Gastrocnemius medialis (tissue), 4 donors: ENCODE measurements at regions of chr15 and their contacts with region 1.

Region 1: GRCh38 chr15:68672781-68673205 is 94.0 kb downstream of the CORO2B start:
- DNase-seq: no peak
- ATAC-seq: no peak
- H3K4me3 ChIP-seq: no peak overlapping the region
- H3K27ac ChIP-seq: no peak overlapping the region
- H3K4me1 ChIP-seq: peaks cover 0 to 4% of the 10 kb centered on the region in 2 donors
- H3K27me3 ChIP-seq: no peaks in the 10 kb centered on the region
- CTCF ChIP-seq: no peak
- POLR2A ChIP-seq: no peak

Region 2: GRCh38 chr15:68304589-68305337 is 368.0 kb before region 1 on chr15:
- in situ Hi-C with region 1: loop called in 1 of 4 experiments (anchors 25 kb)
- intact Hi-C with region 1: loop called (anchors 10 kb)
- DNase-seq: no peak
- ATAC-seq: no peak
- H3K4me3 ChIP-seq: no peak overlapping the region
- H3K27ac ChIP-seq: no peak overlapping the region
- H3K4me1 ChIP-seq: peaks cover 6 to 8% of the 10 kb centered on the region in 2 donors
- H3K27me3 ChIP-seq: no peaks in the 10 kb centered on the region
- CTCF ChIP-seq: no peak
- POLR2A ChIP-seq: no peak

Region 3: DNA sequence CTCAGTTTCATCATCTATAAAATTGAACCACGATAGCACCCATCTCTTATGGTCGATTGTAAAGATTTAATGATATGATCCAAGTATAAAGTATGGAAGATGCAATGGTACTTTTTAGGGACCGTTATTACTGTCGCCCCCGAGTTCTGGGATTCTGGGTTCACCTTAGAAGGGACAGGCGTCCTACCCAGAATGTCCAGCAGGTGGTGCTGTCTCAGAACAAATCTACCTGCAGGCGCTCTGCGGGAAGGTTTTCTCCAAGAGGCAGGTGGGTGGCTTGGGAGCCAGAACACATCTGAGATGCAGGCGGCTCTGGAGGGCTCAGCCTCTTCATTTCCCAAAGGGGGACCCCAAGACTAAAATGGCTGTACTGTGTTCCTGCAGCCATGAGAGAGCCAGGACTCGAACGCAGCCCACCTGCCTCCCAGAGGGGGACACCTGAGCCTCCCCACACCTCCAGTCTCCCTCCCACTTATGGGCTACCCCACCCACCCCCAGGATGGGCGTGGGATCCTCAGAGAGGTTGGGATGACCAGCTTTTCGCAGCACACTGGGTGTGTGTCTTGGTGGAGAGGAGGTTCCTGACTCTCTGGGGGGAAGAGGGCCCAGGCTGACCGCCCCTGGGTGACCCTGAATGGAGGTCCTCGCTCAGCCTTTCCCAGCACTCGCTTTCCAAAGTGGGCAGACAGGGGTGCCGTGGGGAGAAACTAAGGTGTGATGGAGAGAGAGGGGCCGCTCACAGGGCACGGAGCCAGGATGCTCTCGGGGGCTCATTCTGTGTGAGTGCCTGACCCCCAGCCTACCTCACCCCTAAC is 122.1 kb before region 1 on chr15:
- in situ Hi-C with region 1: loop called in 2 of 4 experiments (anchors 5 to 10 kb)
- intact Hi-C with region 1: loop called (anchors 5 kb)
- DNase-seq: peak; percentile 39 to 52
- ATAC-seq: peak; percentile 55 to 72
- H3K4me3 ChIP-seq: no peak overlapping the region
- H3K27ac ChIP-seq: no peak overlapping the region
- H3K4me1 ChIP-seq: no peaks in the 10 kb centered on the region
- H3K27me3 ChIP-seq: no peaks in the 10 kb centered on the region
- CTCF ChIP-seq: peak; percentile 61 to 93 (median 84)
- POLR2A ChIP-seq: no peak

Region 4: GRCh38 chr15:68559345-68560310 is 113.2 kb before region 1 on chr15:
- in situ Hi-C with region 1: loop called (anchors 5 to 10 kb)
- intact Hi-C with region 1: loop called (anchors 1 kb)
- DNase-seq: peak; percentile 33 to 47
- ATAC-seq: peak; percentile 70 to 88
- H3K4me3 ChIP-seq: peak overlapping the region; percentile 36 to 51 (median 44)
- H3K27ac ChIP-seq: no peak overlapping the region
- H3K4me1 ChIP-seq: peaks cover 0 to 4% of the 10 kb centered on the region in 2 donors
- H3K27me3 ChIP-seq: peaks cover 0 to 4% (median 3%) of the 10 kb centered on the region in 3 donors
- CTCF ChIP-seq: peak; percentile 84 to 98 (median 95)
- POLR2A ChIP-seq: no peak

Region 5: GRCh38 chr15:68578174-68578979 is 94.4 kb before region 1 on chr15:
- in situ Hi-C with region 1: no loop called
- intact Hi-C with region 1: loop called (anchors 1 kb)
- DNase-seq: peak; percentile 33 to 52
- ATAC-seq: peak; percentile 63 to 68
- H3K4me3 ChIP-seq: peak overlapping the region; percentile 51 to 64 (median 59)
- H3K27ac ChIP-seq: peak overlapping the region; percentile 26 to 76 (median 60)
- H3K4me1 ChIP-seq: peaks cover 0 to 4% of the 10 kb centered on the region in 2 donors
- H3K27me3 ChIP-seq: peaks cover 10 to 27% (median 11%) of the 10 kb centered on the region in 3 donors
- CTCF ChIP-seq: peak; percentile 31 to 64 (median 53)
- POLR2A ChIP-seq: no peak